ENCODE measurements at regions of chr2 and their contacts with region 1.

Region 1: GRCh38 chr2:100902833-100903405 is 83.0 kb downstream of the NPAS2 start:
- DNase-seq: no peak
- ATAC-seq: no peak

Region 2: GRCh38 chr2:100730346-100730745 is 172.6 kb before region 1 on chr2:
- intact Hi-C with region 1: loop called (anchors 10 kb)
- DNase-seq: peak; percentile 65
- ATAC-seq: peak; percentile 84